ENCODE measurements at regions of chr12 and their contacts with region 1.

Region 1: GRCh38 chr12:116426391-116427136 is 132.6 kb upstream of the MAP1LC3B2 start:
- DNase-seq: peak; percentile 88 to 97
- H3K4me3 ChIP-seq: peak overlapping the region; percentile 42; the same call in 1 of the 2 replicates
- H3K27ac ChIP-seq: peak overlapping the region; percentile 91
- H3K4me1 ChIP-seq: peaks cover 52% of the 10 kb centered on the region
- H3K27me3 ChIP-seq: no peaks in the 10 kb centered on the region
- CTCF ChIP-seq: peak; percentile 52; the same call in 1 of the 2 replicates

Region 2: GRCh38 chr12:115998119-115998633 is 428.4 kb before region 1 on chr12:
- CTCF ChIA-PET with region 1: no interaction called
- POLR2A ChIA-PET with region 1: no interaction called
- intact Hi-C with region 1: loop called (anchors 2 kb)
- DNase-seq: peak in 1 of 2 experiments; percentile 2
- H3K4me3 ChIP-seq: no peak overlapping the region
- H3K27ac ChIP-seq: 0 out of 2 replicates have a peak overlapping the region, but pooled peaks have one; percentile 34
- H3K4me1 ChIP-seq: peaks cover 9% of the 10 kb centered on the region; the same call in 1 of the 2 replicates
- H3K27me3 ChIP-seq: no peaks in the 10 kb centered on the region
- CTCF ChIP-seq: peak; percentile 94

Region 3: GRCh38 chr12:116142936-116143898 is 283.3 kb before region 1 on chr12:
- CTCF ChIA-PET with region 1: no interaction called
- POLR2A ChIA-PET with region 1: no interaction called
- intact Hi-C with region 1: no loop called
- DNase-seq: peak in 1 of 2 experiments; percentile 83
- H3K4me3 ChIP-seq: no peak overlapping the region
- H3K27ac ChIP-seq: peak overlapping the region; percentile 81
- H3K4me1 ChIP-seq: peaks cover 23% of the 10 kb centered on the region
- H3K27me3 ChIP-seq: no peaks in the 10 kb centered on the region
- CTCF ChIP-seq: no peak

Region 4: DNA sequence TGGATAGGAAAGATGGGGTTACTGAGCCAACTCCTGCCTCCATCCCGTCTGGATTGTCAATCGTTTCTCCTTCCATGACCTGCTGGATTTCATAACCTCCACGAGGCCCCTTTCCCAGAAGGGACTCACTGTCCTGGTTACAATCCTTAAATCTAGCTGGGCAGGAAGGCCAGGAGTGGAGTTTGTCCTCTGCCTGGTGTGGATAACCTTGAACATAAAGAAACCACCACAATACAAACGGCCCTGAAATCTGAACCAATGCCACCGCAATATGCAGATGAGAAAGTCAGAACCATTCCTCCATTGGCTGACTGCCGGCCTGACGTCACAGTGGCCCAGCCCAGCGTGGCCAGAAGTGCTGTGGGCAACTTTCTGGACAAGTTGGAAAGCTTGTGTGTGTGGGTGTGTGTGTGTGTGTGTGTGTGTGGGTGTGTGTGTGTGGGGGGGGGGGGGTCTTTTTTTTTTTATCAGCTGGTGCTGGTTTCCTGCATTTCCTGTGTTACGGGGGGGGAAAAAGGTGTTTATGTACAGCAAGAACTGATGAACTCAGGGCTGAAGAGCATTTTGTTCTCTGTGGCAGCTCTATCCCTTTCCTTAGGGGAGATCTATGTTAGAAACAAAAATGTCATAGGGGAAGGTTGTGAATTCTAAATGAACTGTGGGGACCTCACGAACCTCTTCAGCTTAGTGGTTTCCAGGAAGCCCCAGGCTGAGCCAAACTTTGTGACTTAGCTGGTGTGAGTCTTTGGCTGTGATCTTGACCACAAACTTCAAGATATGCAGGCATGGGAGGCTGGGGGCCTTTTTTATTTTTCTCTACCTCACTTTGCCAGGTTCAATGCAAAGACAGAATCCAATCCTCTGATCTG is 67.4 kb before region 1 on chr12:
- CTCF ChIA-PET with region 1: no interaction called
- POLR2A ChIA-PET with region 1: no interaction called
- intact Hi-C with region 1: loop called (anchors 2 kb)
- DNase-seq: peak; percentile 85 to 86
- H3K4me3 ChIP-seq: no peak overlapping the region
- H3K27ac ChIP-seq: peak overlapping the region; percentile 33; the same call in 1 of the 2 replicates
- H3K4me1 ChIP-seq: peaks cover 7% of the 10 kb centered on the region
- H3K27me3 ChIP-seq: no peaks in the 10 kb centered on the region
- CTCF ChIP-seq: no peak

Region 5: GRCh38 chr12:116455540-116456329 is 29.2 kb after region 1 on chr12:
- CTCF ChIA-PET with region 1: no interaction called
- POLR2A ChIA-PET with region 1: no interaction called
- intact Hi-C with region 1: loop called (anchors 1 kb)
- DNase-seq: peak in 1 of 2 experiments; percentile 72
- H3K4me3 ChIP-seq: no peak overlapping the region
- H3K27ac ChIP-seq: peak overlapping the region; percentile 90
- H3K4me1 ChIP-seq: peaks cover 21% of the 10 kb centered on the region
- H3K27me3 ChIP-seq: no peaks in the 10 kb centered on the region
- CTCF ChIP-seq: no peak

Region 6: GRCh38 chr12:116502952-116503542 is 76.5 kb after region 1 on chr12:
- CTCF ChIA-PET with region 1: no interaction called
- POLR2A ChIA-PET with region 1: no interaction called
- intact Hi-C with region 1: loop called (anchors 1 kb)
- DNase-seq: peak; percentile 76 to 100
- H3K4me3 ChIP-seq: no peak overlapping the region; the same call in 1 of the 2 replicates
- H3K27ac ChIP-seq: peak overlapping the region; percentile 90
- H3K4me1 ChIP-seq: peaks cover 17% of the 10 kb centered on the region
- H3K27me3 ChIP-seq: no peaks in the 10 kb centered on the region
- CTCF ChIP-seq: no peak

Region 7: DNA sequence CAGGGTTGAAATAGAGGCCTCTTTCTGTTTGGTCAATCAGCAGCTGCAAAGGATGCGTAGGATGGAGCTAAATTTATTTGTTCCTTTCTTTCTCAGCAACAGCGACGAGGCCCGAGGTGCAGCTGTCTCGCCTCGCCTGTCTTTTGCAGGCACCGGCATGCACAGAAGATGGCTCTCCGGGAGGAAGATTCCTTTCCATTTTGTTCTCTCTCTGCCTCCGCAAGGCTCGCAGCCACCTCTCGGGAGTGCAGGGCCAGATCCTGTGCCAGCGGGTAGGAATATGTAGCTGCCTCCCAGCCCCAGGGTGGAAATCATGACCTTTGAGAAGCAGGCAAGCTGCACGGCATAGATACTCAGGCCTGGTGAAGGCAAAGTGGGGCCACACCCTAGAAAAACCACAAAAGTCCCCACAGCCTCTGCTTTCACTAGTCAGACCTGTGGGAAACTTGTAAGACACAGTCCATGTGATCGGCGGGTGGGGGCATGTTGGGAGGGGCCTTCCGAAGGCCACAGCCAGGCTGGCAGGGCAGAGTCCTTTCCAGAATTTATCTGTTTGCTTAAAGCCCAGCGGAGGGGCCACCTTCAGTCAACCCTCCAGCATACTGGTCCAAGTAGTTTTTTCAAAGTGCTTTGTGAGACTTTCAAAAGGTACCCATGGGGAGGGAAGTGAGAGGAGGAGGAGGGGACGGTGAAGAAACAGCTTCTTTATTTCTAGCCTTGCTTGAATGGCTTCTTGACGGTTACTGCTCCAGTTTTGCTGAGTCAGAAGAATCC is 132.8 kb after region 1 on chr12 and contains the start of gene MAP1LC3B2:
- CTCF ChIA-PET with region 1: no interaction called
- POLR2A ChIA-PET with region 1: no interaction called
- intact Hi-C with region 1: loop called (anchors 1 kb)
- DNase-seq: peak; percentile 88 to 95
- H3K4me3 ChIP-seq: peak within 1 kb of the TSS; percentile 18; the same call in 1 of the 2 replicates
- H3K27ac ChIP-seq: peak within 1 kb of the TSS; percentile 87
- H3K4me1 ChIP-seq: peaks cover 23% of the 10 kb centered on the region
- H3K27me3 ChIP-seq: no peaks in the 10 kb centered on the region
- CTCF ChIP-seq: no peak
- total RNA-seq, gene MAP1LC3B2: 1.1 and 1.4 TPM in 2 replicates

Region 8: GRCh38 chr12:116697305-116697704 is 270.7 kb after region 1 on chr12:
- CTCF ChIA-PET with region 1: no interaction called
- POLR2A ChIA-PET with region 1: no interaction called
- intact Hi-C with region 1: loop called (anchors 5 kb)
- DNase-seq: peak in 1 of 2 experiments; percentile 23
- H3K4me3 ChIP-seq: no peak overlapping the region
- H3K27ac ChIP-seq: no peak overlapping the region
- H3K4me1 ChIP-seq: peaks cover 30% of the 10 kb centered on the region
- H3K27me3 ChIP-seq: no peaks in the 10 kb centered on the region
- CTCF ChIP-seq: no peak; the same call in 1 of the 2 replicates

Region 9: GRCh38 chr12:116916714-116917114 is 490.1 kb after region 1 on chr12:
- CTCF ChIA-PET with region 1: no interaction called
- POLR2A ChIA-PET with region 1: no interaction called
- intact Hi-C with region 1: no loop called
- DNase-seq: peak; percentile 62 to 95
- H3K4me3 ChIP-seq: peak overlapping the region; percentile 36; the same call in 1 of the 2 replicates
- H3K27ac ChIP-seq: peak overlapping the region; percentile 97
- H3K4me1 ChIP-seq: peaks cover 53% of the 10 kb centered on the region
- H3K27me3 ChIP-seq: no peaks in the 10 kb centered on the region
- CTCF ChIP-seq: peak; percentile 55

Measured in PC-9 (cell line).